Activated CD4-positive, alpha-beta memory T cell treated with anti-CD3 and anti-CD28 coated beads, Interleukin-2, amount 10 ng/mL, durations not matched to agents 7 days and 5 days (primary cell): ENCODE measurements at regions of chr10 and their contacts with region 1.

Region 1: GRCh38 chr10:69914398-69915214 is 112.9 kb downstream of the COL13A1 start:
- DNase-seq: peak; percentile 60
- H3K4me3 Mint-ChIP-seq: no peak overlapping the region
- H3K27ac Mint-ChIP-seq: no peak overlapping the region
- H3K4me1 Mint-ChIP-seq: no peaks in the 10 kb centered on the region
- H3K27me3 Mint-ChIP-seq: peaks cover 7% of the 10 kb centered on the region

Region 2: DNA sequence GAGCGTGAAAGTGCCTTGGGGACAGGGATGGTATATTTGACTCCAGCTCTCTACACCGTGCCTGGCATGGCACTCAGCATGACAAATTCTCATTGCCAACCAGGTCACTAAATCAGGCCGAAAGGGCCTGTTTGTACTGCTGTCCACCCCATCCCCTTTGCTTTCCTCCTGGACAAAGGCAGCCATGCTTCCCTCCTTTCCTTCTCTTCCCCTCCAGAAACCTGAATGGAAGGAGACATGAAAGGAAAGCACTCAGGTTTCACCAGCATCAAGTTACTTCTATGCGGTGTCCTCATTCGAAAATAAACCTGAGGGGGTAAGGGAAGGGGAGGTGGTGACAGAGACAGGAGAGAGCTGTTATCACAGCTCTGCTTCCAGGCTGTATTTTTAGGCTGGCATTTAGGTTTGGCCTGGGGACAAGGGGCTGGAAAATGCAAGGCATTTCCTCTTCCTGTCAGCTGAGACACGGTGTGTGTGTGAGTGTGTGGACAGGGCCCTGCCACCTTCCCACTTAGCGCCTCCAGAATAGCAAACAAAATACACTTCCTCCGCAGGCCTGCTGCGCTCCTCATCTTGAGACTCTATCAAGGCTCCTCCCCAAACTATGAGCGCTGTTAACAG is 192.8 kb before region 1 on chr10:
- CTCF ChIA-PET with region 1: no interaction called
- POLR2A ChIA-PET with region 1: no interaction called
- DNase-seq: no peak
- H3K4me3 Mint-ChIP-seq: no peak overlapping the region
- H3K27ac Mint-ChIP-seq: no peak overlapping the region
- H3K4me1 Mint-ChIP-seq: no peaks in the 10 kb centered on the region
- H3K27me3 Mint-ChIP-seq: peaks cover 25% of the 10 kb centered on the region

Region 3: GRCh38 chr10:69786791-69787190 is 127.8 kb before region 1 on chr10:
- CTCF ChIA-PET with region 1: interaction called, 22 read pairs
- POLR2A ChIA-PET with region 1: no interaction called
- DNase-seq: no peak
- H3K4me3 Mint-ChIP-seq: no peak overlapping the region
- H3K27ac Mint-ChIP-seq: no peak overlapping the region
- H3K4me1 Mint-ChIP-seq: no peaks in the 10 kb centered on the region
- H3K27me3 Mint-ChIP-seq: peaks cover 21% of the 10 kb centered on the region

Region 4: GRCh38 chr10:69901628-69902505 is 12.7 kb before region 1 on chr10:
- CTCF ChIA-PET with region 1: interaction called, 16 read pairs
- POLR2A ChIA-PET with region 1: no interaction called
- DNase-seq: peak; percentile 18
- H3K4me3 Mint-ChIP-seq: no peak overlapping the region
- H3K27ac Mint-ChIP-seq: no peak overlapping the region
- H3K4me1 Mint-ChIP-seq: no peaks in the 10 kb centered on the region
- H3K27me3 Mint-ChIP-seq: no peaks in the 10 kb centered on the region